Adrenal gland (tissue), 19 donors: ENCODE measurements at regions of chr18 and their contacts with region 1.

Region 1: GRCh38 chr18:32566960-32567359 is 96.3 kb upstream of the GAREM1 start:
- DNase-seq: no peak
- H3K4me3 ChIP-seq: no peak overlapping the region
- H3K27ac ChIP-seq: no peak overlapping the region
- H3K4me1 ChIP-seq: no peaks in the 10 kb centered on the region
- H3K27me3 ChIP-seq: no peaks in the 10 kb centered on the region
- CTCF ChIP-seq: no peak
- POLR2A ChIP-seq: no peak

Region 2: GRCh38 chr18:31825772-31826171 is 741.2 kb before region 1 on chr18:
- intact Hi-C with region 1: no loop called
- DNase-seq: no peak
- H3K4me3 ChIP-seq: no peak overlapping the region
- H3K27ac ChIP-seq: no peak overlapping the region
- H3K4me1 ChIP-seq: no peaks in the 10 kb centered on the region
- H3K27me3 ChIP-seq: no peaks in the 10 kb centered on the region
- CTCF ChIP-seq: no peak
- POLR2A ChIP-seq: no peak

Region 3: DNA sequence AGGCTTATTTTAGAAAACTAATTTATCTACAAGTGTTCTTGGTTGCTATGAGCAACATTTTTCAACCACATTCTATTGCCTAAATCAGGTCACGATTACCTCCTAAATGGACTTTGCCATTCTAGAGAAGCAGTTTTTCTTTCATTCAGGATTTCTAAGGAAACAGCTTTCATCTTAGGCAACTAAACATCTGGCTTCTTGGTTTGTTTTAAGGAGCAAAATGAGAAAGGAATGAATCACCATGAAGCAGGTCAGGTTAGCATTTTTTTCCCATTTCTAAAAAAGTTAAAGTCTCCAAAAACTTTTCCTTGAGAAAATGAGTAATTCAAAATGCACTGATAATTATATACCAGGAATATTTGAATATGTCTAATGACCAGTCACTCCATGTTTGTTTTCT is 211.1 kb before region 1 on chr18:
- intact Hi-C with region 1: no loop called
- DNase-seq: no peak
- H3K4me3 ChIP-seq: no peak overlapping the region
- H3K27ac ChIP-seq: peak overlapping the region in 3 of 5 donors; percentile 8 to 23 (median 11)
- H3K4me1 ChIP-seq: peaks cover 7 to 32% of the 10 kb centered on the region in 2 donors
- H3K27me3 ChIP-seq: no peaks in the 10 kb centered on the region
- CTCF ChIP-seq: no peak
- POLR2A ChIP-seq: no peak

Region 4: DNA sequence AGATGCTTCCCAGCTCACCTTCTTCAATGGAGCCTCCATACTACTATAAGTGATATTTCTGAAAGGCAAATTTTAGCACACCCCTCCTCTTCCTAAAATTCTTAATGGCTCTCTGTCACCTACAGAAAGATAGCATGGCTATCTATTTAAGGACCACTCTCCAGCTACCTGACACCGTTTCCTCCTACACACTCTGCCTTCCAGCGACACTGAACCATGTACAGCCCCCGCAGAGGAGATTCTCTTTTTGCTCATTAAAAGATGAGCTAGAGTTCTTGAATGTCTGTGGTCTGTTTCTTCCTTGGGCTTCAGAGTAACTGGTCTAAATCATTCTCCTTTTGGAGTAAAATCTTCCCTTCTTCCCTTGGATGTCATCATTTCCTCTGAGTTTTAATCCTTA is 57.8 kb before region 1 on chr18:
- intact Hi-C with region 1: loop called in 1 of 2 experiments (anchors 10 kb)
- DNase-seq: no peak
- H3K4me3 ChIP-seq: no peak overlapping the region
- H3K27ac ChIP-seq: no peak overlapping the region
- H3K4me1 ChIP-seq: no peaks in the 10 kb centered on the region
- H3K27me3 ChIP-seq: no peaks in the 10 kb centered on the region
- CTCF ChIP-seq: no peak
- POLR2A ChIP-seq: no peak